ENCODE measurements at regions of chr11 and their contacts with region 1.

Region 1: DNA sequence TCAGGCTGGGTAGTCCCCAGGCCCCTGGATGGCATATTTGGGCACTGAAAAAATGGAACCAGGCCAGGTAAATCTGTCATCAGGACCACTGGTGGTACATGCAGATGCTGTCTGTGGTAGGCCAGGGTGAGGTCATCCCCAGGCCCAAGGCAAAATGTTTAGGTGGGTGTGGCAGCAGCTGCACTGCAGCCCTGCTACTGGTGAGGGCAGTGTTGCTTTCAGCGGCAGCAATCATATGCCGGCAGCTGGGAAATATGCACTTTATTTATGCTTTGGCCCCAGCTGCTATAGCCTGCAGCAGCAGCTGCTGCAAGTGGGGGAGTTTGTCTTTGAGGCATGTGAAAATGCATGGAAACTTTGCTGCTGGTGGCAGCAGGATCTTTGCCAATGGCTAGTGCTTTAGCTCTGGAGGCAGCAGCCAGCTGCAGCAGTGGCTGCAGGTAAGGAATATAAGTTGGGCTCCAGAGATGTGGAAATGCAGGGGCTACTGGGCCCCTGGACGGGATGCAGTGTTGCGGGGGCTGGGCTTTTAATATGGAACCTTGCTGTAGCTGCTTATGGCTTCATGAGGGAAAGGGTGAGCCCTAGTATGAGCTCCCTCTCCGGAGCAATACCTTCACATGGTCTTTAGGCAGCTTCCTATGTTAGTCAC is 365.7 kb upstream of the CADM1 start:
- H3K4me3 Mint-ChIP-seq: no peak overlapping the region
- H3K27ac Mint-ChIP-seq: no peak overlapping the region
- H3K4me1 Mint-ChIP-seq: peaks cover 38% of the 10 kb centered on the region
- H3K27me3 Mint-ChIP-seq: peaks cover 36% of the 10 kb centered on the region

Region 2: GRCh38 chr11:115930886-115931547 is 61.1 kb after region 1 on chr11:
- intact Hi-C with region 1: loop called (anchors 10 kb)
- H3K4me3 Mint-ChIP-seq: no peak overlapping the region
- H3K27ac Mint-ChIP-seq: no peak overlapping the region
- H3K4me1 Mint-ChIP-seq: peaks cover 40% of the 10 kb centered on the region
- H3K27me3 Mint-ChIP-seq: peaks cover 22% of the 10 kb centered on the region

Region 3: GRCh38 chr11:116224154-116224888 is 354.4 kb after region 1 on chr11:
- intact Hi-C with region 1: loop called (anchors 5 kb)
- H3K4me3 Mint-ChIP-seq: no peak overlapping the region
- H3K27ac Mint-ChIP-seq: no peak overlapping the region
- H3K4me1 Mint-ChIP-seq: no peaks in the 10 kb centered on the region
- H3K27me3 Mint-ChIP-seq: peaks cover 9% of the 10 kb centered on the region